Calu3 (cell line): ENCODE measurements at regions of chrX and their contacts with region 1.

Region 1: DNA sequence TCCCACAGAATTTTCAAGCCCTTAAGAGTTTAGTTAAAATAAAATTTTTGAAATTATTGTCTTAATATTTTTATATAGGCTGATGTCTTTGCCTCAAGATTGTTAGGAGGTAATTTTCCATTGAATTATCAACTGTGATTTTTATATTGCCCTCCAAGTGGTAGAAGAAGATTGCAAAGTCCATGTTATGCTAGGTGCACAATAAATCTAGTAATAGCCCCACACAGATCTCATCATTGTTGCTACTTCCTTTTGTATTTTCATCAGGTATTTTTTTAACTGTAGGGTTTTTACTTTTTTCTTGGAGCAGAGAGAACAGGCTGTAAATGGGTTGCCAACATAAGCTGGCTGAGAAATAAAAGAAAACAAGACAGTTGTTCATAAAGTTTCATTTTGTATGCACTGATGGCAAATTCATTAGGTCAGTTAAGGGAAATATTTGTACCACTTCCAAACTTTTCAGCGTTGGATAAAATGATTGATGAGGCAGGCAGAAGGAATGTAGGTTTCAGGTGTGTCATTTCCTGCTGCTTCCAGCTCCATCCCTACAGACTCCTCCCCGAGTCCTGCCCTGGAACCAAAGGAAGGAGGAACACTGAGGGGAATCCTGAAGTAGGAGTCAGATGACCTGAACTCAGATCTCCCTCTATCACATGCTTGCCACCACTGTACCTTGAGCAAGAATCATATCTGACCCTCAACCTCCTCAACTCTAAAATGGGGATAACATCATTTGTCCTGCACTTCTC is 105.5 kb downstream of the PRRG1 start:
- DNase-seq: peak; percentile 60
- H3K4me3 Mint-ChIP-seq: peak overlapping the region; percentile 41
- H3K27ac Mint-ChIP-seq: peak overlapping the region; percentile 84
- H3K4me1 Mint-ChIP-seq: peaks cover 28% of the 10 kb centered on the region
- H3K27me3 Mint-ChIP-seq: no peaks in the 10 kb centered on the region
- CTCF ChIP-seq: no peak

Region 2: GRCh38 chrX:37287817-37288444 is 166.8 kb before region 1 on chrX:
- CTCF ChIA-PET with region 1: no interaction called
- intact Hi-C with region 1: no loop called
- DNase-seq: no peak
- H3K4me3 Mint-ChIP-seq: no peak overlapping the region
- H3K27ac Mint-ChIP-seq: no peak overlapping the region
- H3K4me1 Mint-ChIP-seq: no peaks in the 10 kb centered on the region
- H3K27me3 Mint-ChIP-seq: no peaks in the 10 kb centered on the region
- CTCF ChIP-seq: no peak

Region 3: GRCh38 chrX:37349221-37350064 is 105.3 kb before region 1 on chrX and contains the start of gene PRRG1:
- CTCF ChIA-PET with region 1: no interaction called
- intact Hi-C with region 1: loop called (anchors 10 kb)
- DNase-seq: peak; percentile 82
- H3K4me3 Mint-ChIP-seq: peak within 1 kb of the TSS; percentile 92
- H3K27ac Mint-ChIP-seq: peak within 1 kb of the TSS; percentile 90
- H3K4me1 Mint-ChIP-seq: peaks cover 24% of the 10 kb centered on the region
- H3K27me3 Mint-ChIP-seq: no peaks in the 10 kb centered on the region
- CTCF ChIP-seq: no peak
- total RNA-seq, gene PRRG1: 23.3 and 26.1 TPM in 2 replicates

Region 4: GRCh38 chrX:37472806-37473205 is 18.1 kb after region 1 on chrX:
- CTCF ChIA-PET with region 1: no interaction called
- intact Hi-C with region 1: loop called (anchors 1 kb)
- DNase-seq: peak; percentile 12
- H3K4me3 Mint-ChIP-seq: no peak overlapping the region
- H3K27ac Mint-ChIP-seq: no peak overlapping the region
- H3K4me1 Mint-ChIP-seq: peaks cover 28% of the 10 kb centered on the region
- H3K27me3 Mint-ChIP-seq: no peaks in the 10 kb centered on the region
- CTCF ChIP-seq: no peak

Region 5: DNA sequence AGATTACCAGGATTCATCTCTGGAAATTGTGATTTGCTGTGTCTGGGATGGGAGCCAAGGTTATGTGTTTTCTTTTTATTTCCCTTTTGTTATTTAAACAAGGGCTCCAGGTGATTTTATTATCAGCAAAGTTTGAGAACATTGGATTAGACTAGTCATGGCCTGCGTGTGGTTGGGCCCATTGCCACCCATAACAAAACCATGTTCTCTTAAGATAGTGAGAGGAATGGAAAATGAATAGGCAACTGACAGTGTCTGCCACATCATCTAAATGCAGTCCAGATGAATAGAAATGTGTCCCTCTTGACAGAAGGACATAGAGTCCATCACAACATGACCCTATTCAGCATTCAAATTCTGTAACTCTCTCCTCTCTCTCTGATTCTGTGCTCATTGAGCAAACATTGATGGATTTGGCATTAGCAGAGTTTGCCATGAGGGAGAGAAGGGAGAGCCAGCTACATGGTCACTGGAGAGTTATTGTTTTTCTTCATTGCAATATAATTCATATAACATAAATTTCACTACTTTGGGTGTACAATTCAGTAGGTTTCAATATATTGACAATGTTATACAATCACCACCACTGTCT is 242.6 kb after region 1 on chrX:
- CTCF ChIA-PET with region 1: no interaction called
- intact Hi-C with region 1: no loop called
- DNase-seq: no peak
- H3K4me3 Mint-ChIP-seq: no peak overlapping the region
- H3K27ac Mint-ChIP-seq: no peak overlapping the region
- H3K4me1 Mint-ChIP-seq: no peaks in the 10 kb centered on the region
- H3K27me3 Mint-ChIP-seq: no peaks in the 10 kb centered on the region
- CTCF ChIP-seq: no peak

Region 6: GRCh38 chrX:37912286-37912685 is 457.6 kb after region 1 on chrX:
- CTCF ChIA-PET with region 1: no interaction called
- intact Hi-C with region 1: no loop called
- DNase-seq: peak; percentile 21
- H3K4me3 Mint-ChIP-seq: no peak overlapping the region
- H3K27ac Mint-ChIP-seq: no peak overlapping the region
- H3K4me1 Mint-ChIP-seq: no peaks in the 10 kb centered on the region
- H3K27me3 Mint-ChIP-seq: no peaks in the 10 kb centered on the region
- CTCF ChIP-seq: no peak